ENCODE measurements at regions of chr11 and their contacts with region 1.

Region 1: GRCh38 chr11:34890812-34891211 is 25.4 kb downstream of the APIP start:
- DNase-seq: no peak
- H3K4me3 Mint-ChIP-seq: no peak overlapping the region
- H3K27ac Mint-ChIP-seq: no peak overlapping the region
- H3K4me1 Mint-ChIP-seq: no peaks in the 10 kb centered on the region
- H3K27me3 Mint-ChIP-seq: no peaks in the 10 kb centered on the region

Region 2: GRCh38 chr11:34565417-34566207 is 325.2 kb before region 1 on chr11:
- CTCF ChIA-PET with region 1: interaction called, 3 read pairs
- intact Hi-C with region 1: loop called (anchors 1 kb)
- DNase-seq: peak; percentile 60
- H3K4me3 Mint-ChIP-seq: no peak overlapping the region
- H3K27ac Mint-ChIP-seq: no peak overlapping the region
- H3K4me1 Mint-ChIP-seq: no peaks in the 10 kb centered on the region
- H3K27me3 Mint-ChIP-seq: peaks cover 5% of the 10 kb centered on the region

Region 3: GRCh38 chr11:34585735-34586487 is 304.9 kb before region 1 on chr11:
- CTCF ChIA-PET with region 1: interaction called, 25 read pairs
- intact Hi-C with region 1: loop called (anchors 1 kb)
- DNase-seq: no peak
- H3K4me3 Mint-ChIP-seq: no peak overlapping the region
- H3K27ac Mint-ChIP-seq: no peak overlapping the region
- H3K4me1 Mint-ChIP-seq: peaks cover 4% of the 10 kb centered on the region
- H3K27me3 Mint-ChIP-seq: peaks cover 16% of the 10 kb centered on the region

Region 4: DNA sequence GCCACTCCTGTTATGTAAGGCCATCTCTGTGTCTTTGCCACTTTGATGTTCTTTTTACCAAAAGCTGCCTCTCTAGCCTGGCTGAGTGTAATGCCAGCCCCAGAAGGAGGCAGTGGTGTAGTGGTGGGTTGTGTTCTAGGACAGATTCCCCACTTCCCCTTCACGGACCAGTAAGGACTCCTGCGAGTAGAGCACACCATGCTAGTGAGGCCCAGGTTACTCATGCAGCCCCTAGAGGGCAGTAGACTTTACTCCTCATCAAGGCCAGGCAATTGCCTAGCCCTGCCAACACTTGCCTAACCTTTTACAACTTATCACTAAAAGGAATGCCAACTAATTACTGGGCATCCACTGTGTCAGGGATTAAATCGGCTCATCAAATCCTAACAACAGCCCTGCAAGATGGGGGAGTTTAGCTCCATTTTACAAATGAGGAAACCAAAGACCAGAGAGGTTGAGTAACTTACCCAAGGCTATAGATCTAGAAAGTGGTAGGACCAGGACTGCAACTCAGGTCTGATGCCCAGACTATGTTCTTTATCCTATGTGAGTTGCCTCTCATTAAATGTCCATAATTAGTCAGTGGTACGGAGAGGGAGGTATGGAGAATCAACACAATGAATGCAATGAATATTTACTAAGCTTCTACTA is 50.0 kb before region 1 on chr11:
- CTCF ChIA-PET with region 1: interaction called, 4 read pairs
- intact Hi-C with region 1: loop called (anchors 2 kb)
- DNase-seq: peak; percentile 32
- H3K4me3 Mint-ChIP-seq: no peak overlapping the region
- H3K27ac Mint-ChIP-seq: no peak overlapping the region
- H3K4me1 Mint-ChIP-seq: no peaks in the 10 kb centered on the region
- H3K27me3 Mint-ChIP-seq: peaks cover 8% of the 10 kb centered on the region

Region 5: DNA sequence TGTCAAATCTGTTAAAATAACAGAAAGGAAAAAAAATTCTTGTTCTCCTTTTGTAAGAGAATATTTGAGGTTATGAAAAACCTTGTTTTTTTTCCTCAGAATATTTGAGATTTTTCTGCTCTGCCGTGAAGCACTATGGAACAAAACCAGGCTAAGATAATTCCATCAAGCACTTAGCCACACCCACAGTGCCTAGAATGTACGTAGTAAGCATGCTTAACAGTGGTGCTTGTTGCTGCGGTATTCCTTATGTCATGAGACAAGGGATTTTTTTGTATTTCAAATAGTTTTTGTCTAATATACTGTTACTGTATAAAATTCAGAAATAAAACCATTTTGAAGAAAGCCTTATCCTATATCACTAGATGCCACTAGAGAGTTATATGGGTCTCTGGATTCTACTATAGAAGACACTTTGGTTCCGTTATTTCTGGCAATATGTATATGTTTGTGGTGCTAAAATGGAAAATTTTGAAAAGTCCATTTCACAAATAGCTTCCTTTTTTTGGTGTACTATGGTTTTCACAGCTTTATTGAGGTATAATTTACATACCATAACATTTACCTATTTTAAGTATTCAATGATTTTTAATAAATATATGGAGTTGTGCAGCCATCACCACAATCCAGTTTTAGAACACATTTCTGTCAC is 49.3 kb after region 1 on chr11:
- CTCF ChIA-PET with region 1: no interaction called
- intact Hi-C with region 1: no loop called
- DNase-seq: no peak
- H3K4me3 Mint-ChIP-seq: no peak overlapping the region
- H3K27ac Mint-ChIP-seq: no peak overlapping the region
- H3K4me1 Mint-ChIP-seq: peaks cover 21% of the 10 kb centered on the region
- H3K27me3 Mint-ChIP-seq: no peaks in the 10 kb centered on the region